ENCODE measurements at regions of chr2 and their contacts with region 1.

Region 1: GRCh38 chr2:206981739-206982340 is 42.5 kb downstream of the CPO start:
- DNase-seq: peak; percentile 76
- H3K4me3 Mint-ChIP-seq: no peak overlapping the region
- H3K27ac Mint-ChIP-seq: no peak overlapping the region
- H3K4me1 Mint-ChIP-seq: peaks cover 22% of the 10 kb centered on the region
- H3K27me3 Mint-ChIP-seq: no peaks in the 10 kb centered on the region
- CTCF ChIP-seq: peak; percentile 88

Region 2: DNA sequence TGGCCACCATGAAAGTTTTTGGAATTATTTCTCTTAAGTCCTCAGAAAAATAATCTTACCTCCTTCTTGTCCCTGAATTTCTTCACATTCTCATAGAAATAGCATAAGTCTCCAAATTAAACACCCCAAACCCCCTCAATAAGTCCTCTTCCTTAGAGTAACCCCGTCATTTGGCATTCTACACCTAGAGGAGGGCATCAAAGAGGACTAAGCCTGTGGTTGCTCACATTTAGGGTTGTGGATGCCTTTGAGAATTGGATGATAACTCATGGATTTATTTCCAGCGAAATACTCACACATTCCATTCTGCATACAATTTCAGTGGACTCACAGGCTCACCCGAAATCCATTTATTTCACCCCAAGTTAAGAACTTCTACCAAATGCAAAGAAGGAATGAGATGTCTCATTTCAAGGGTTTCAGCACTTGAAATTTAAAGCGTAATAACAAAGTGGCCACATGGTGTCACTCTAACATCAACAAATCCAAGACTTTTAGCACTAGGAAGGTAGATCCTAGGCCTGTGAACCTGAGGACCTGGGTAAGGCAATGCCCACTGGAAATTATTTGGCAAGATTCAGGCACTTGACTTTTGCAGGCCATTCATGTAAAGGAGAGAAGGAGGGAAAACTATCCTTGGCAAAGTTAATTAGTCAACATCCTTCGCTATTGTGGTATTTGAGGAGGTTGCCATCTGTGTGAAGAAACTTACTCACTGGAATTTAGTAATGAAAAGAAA is 288.3 kb before region 1 on chr2:
- CTCF ChIA-PET with region 1: no interaction called
- POLR2A ChIA-PET with region 1: no interaction called
- intact Hi-C with region 1: loop called (anchors 5 kb)
- DNase-seq: peak; percentile 73
- H3K4me3 Mint-ChIP-seq: no peak overlapping the region
- H3K27ac Mint-ChIP-seq: no peak overlapping the region
- H3K4me1 Mint-ChIP-seq: no peaks in the 10 kb centered on the region
- H3K27me3 Mint-ChIP-seq: no peaks in the 10 kb centered on the region
- CTCF ChIP-seq: peak; percentile 70

Region 3: GRCh38 chr2:206800506-206801417 is 181.1 kb before region 1 on chr2:
- CTCF ChIA-PET with region 1: interaction called, 18 read pairs
- POLR2A ChIA-PET with region 1: no interaction called
- intact Hi-C with region 1: loop called (anchors 2 kb)
- DNase-seq: peak; percentile 84
- H3K4me3 Mint-ChIP-seq: no peak overlapping the region
- H3K27ac Mint-ChIP-seq: no peak overlapping the region
- H3K4me1 Mint-ChIP-seq: no peaks in the 10 kb centered on the region
- H3K27me3 Mint-ChIP-seq: no peaks in the 10 kb centered on the region
- CTCF ChIP-seq: peak; percentile 76

Region 4: GRCh38 chr2:207073801-207074678 is 92.2 kb after region 1 on chr2:
- CTCF ChIA-PET with region 1: no interaction called
- POLR2A ChIA-PET with region 1: no interaction called
- intact Hi-C with region 1: loop called (anchors 5 kb)
- DNase-seq: no peak
- H3K4me3 Mint-ChIP-seq: no peak overlapping the region
- H3K27ac Mint-ChIP-seq: no peak overlapping the region
- H3K4me1 Mint-ChIP-seq: no peaks in the 10 kb centered on the region
- H3K27me3 Mint-ChIP-seq: no peaks in the 10 kb centered on the region
- CTCF ChIP-seq: no peak

Region 5: DNA sequence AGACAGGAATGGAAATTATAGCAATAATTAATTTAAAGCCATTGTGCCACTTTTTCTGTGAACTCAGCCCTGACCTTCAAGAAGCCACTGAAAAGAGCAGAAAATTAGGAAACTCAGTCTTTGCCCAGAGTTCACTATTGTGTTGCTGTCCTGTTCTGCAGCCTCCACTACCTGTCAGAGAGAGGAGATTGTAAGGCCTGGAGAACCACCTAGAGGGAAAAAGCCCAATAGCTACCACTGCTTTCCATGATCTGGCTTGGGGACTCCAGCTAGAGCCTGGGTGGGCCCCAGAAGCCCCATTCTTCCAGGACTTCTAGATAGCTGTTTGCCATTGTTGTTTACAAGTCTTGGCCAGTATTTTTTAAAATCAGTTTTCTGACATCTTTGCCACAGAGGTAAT is 360.0 kb after region 1 on chr2:
- CTCF ChIA-PET with region 1: interaction called, 5 read pairs
- POLR2A ChIA-PET with region 1: no interaction called
- intact Hi-C with region 1: loop called (anchors 5 kb)
- DNase-seq: peak; percentile 35
- H3K4me3 Mint-ChIP-seq: no peak overlapping the region
- H3K27ac Mint-ChIP-seq: no peak overlapping the region
- H3K4me1 Mint-ChIP-seq: peaks cover 16% of the 10 kb centered on the region
- H3K27me3 Mint-ChIP-seq: no peaks in the 10 kb centered on the region
- CTCF ChIP-seq: no peak

Region 6: DNA sequence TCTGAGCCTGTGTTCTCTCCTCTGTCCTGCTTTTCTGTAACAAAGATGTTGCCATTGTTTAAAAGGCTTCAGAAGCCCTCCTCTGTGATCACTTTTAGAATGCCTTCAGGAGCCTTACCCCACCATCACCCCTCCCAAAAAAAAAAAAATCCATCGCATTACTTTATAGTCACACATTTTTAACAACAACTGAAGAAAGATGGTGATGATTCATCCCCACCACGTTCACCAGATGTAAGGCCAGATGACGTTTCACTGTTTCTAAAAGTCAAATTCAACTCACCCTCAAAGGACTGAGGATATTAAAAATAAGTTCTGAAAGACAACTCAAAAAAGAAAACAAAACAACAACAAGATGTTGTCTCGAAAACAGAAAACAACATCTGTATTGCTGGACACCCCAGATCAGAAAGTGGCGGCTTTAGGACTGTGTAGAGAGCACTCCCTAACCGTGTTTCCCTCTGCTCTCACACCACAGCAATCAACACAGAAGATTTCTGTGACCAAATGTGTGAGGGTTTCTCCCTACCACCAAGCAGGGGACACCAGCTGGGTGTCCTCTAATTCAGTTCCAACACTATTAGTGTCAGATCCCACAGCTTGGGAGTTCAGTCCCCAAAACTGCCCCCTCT is 486.0 kb after region 1 on chr2:
- CTCF ChIA-PET with region 1: interaction called, 134 read pairs
- POLR2A ChIA-PET with region 1: interaction called, 6 read pairs
- intact Hi-C with region 1: loop called (anchors 1 kb)
- DNase-seq: peak; percentile 43
- H3K4me3 Mint-ChIP-seq: no peak overlapping the region
- H3K27ac Mint-ChIP-seq: peak overlapping the region; percentile 87
- H3K4me1 Mint-ChIP-seq: peaks cover 21% of the 10 kb centered on the region
- H3K27me3 Mint-ChIP-seq: no peaks in the 10 kb centered on the region
- CTCF ChIP-seq: no peak

Region 7: GRCh38 chr2:207683879-207684627 is 702.2 kb after region 1 on chr2:
- CTCF ChIA-PET with region 1: no interaction called
- POLR2A ChIA-PET with region 1: no interaction called
- intact Hi-C with region 1: no loop called
- DNase-seq: peak; percentile 43
- H3K4me3 Mint-ChIP-seq: no peak overlapping the region
- H3K27ac Mint-ChIP-seq: no peak overlapping the region
- H3K4me1 Mint-ChIP-seq: peaks cover 6% of the 10 kb centered on the region
- H3K27me3 Mint-ChIP-seq: no peaks in the 10 kb centered on the region
- CTCF ChIP-seq: no peak

Measured in MCF 10A (cell line).